CD14-positive monocyte (primary cell): ENCODE measurements at regions of chr3 and their contacts with region 1.

Region 1: DNA sequence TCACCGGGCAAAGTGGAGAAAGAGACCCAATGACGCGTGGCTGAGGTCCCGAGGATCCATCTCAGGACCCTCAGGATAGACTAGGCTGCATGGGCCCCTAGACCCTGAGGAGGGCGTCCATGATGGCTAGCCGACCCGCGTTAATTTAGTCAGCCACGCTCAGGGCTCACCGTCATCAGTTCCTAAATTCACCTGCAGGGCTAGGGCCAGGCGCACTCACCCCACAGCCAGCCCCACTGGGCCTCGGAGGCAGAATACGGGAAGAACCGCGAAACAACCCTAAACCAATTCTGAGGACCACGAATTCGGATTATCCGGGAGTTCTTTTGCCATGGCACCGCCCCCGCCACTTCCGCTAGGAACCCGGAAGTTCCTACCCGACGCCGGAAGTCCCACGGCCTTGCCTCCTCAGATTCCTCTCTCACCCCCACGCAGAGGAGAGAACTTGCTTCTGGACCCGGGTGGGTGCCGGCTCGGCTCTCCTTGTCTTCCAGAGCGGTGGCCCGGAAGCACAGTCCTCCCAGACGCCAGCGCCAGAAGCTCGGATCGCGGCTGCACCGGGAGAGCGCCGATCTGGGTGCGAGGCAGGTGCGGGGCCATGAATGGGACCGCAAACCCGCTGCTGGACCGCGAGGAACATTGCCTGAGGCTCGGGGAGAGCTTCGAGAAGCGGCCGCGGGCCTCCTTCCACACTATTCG is at the starts of genes EAF1 and METTL6:
- DNase-seq: peak; percentile 87 to 93 (median 89)
- H3K4me3 ChIP-seq: peak within 1 kb of the TSS; percentile 73 to 97 (median 92)
- H3K4me3 Mint-ChIP-seq: peak within 1 kb of the TSS; percentile 96 to 99
- H3K27ac ChIP-seq: peak within 1 kb of the TSS; percentile 94 to 99
- H3K27ac Mint-ChIP-seq: peak within 1 kb of the TSS; percentile 98 to 100 (median 99)
- H3K4me1 ChIP-seq: peaks cover 21 to 32% of the 10 kb centered on the region in 2 donors
- H3K4me1 Mint-ChIP-seq: peaks cover 46% of the 10 kb centered on the region
- H3K27me3 ChIP-seq: no peaks in the 10 kb centered on the region
- H3K27me3 Mint-ChIP-seq: no peaks in the 10 kb centered on the region
- CTCF ChIP-seq: no peak
- polyA plus RNA-seq, gene EAF1: 9.0 to 44.0 (median 9.1) TPM
- polyA plus RNA-seq, gene METTL6: 4.4 to 15.1 (median 9.1) TPM

Region 2: GRCh38 chr3:15291589-15292541 is 135.5 kb before region 1 on chr3:
- intact Hi-C with region 1: no loop called
- DNase-seq: peak; percentile 66 to 90 (median 70)
- H3K4me3 ChIP-seq: peak overlapping the region in 1 of 3 experiments; percentile 8
- H3K4me3 Mint-ChIP-seq: peak overlapping the region; percentile 50 to 62
- H3K27ac ChIP-seq: peak overlapping the region; percentile 91 to 99
- H3K27ac Mint-ChIP-seq: peak overlapping the region; percentile 96 to 100 (median 99)
- H3K4me1 ChIP-seq: peaks cover 99 to 100% of the 10 kb centered on the region in 2 donors
- H3K4me1 Mint-ChIP-seq: peaks cover 95% of the 10 kb centered on the region
- H3K27me3 ChIP-seq: no peaks in the 10 kb centered on the region
- H3K27me3 Mint-ChIP-seq: peaks cover 0 to 6% (median 0%) of the 10 kb centered on the region in 3 donors
- CTCF ChIP-seq: no peak

Region 3: DNA sequence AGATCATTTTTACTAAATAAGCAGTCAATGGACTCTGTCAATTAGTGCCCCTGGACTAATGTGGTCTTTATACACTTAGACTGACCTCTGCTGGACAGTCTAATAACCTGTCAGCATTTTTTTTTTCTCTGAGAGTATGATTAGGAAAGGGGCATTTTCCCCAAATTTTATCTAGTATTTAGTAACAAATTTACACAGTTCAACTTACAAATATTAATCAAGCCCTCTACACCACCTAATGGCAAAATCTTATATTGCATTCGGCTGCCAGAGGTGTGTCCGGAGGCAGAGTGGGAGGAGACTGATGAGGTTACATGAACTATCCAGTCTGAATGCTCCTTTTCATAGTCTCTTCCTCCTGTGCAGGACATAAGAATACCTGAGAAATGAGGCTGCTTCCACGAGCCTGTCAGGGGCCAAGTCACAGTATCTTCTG is 130.2 kb after region 1 on chr3:
- intact Hi-C with region 1: loop called in 1 of 2 experiments (anchors 5 kb)
- DNase-seq: peak; percentile 64 to 80 (median 68)
- H3K4me3 ChIP-seq: no peak overlapping the region
- H3K4me3 Mint-ChIP-seq: peak overlapping the region in 1 of 2 donors; percentile 30
- H3K27ac ChIP-seq: peak overlapping the region in 1 of 2 donors; percentile 91
- H3K27ac Mint-ChIP-seq: peak overlapping the region; percentile 92 to 98 (median 97)
- H3K4me1 ChIP-seq: peaks cover 30 to 33% of the 10 kb centered on the region in 2 donors
- H3K4me1 Mint-ChIP-seq: peaks cover 29% of the 10 kb centered on the region
- H3K27me3 ChIP-seq: no peaks in the 10 kb centered on the region
- H3K27me3 Mint-ChIP-seq: peaks cover 0 to 2% (median 0%) of the 10 kb centered on the region in 3 donors
- CTCF ChIP-seq: peak; percentile 92